Activated B cell treated with CpG ODN at 0.5 μM for 24 hours (primary cell): ENCODE measurements at regions of chr17 and their contacts with region 1.

Region 1: DNA sequence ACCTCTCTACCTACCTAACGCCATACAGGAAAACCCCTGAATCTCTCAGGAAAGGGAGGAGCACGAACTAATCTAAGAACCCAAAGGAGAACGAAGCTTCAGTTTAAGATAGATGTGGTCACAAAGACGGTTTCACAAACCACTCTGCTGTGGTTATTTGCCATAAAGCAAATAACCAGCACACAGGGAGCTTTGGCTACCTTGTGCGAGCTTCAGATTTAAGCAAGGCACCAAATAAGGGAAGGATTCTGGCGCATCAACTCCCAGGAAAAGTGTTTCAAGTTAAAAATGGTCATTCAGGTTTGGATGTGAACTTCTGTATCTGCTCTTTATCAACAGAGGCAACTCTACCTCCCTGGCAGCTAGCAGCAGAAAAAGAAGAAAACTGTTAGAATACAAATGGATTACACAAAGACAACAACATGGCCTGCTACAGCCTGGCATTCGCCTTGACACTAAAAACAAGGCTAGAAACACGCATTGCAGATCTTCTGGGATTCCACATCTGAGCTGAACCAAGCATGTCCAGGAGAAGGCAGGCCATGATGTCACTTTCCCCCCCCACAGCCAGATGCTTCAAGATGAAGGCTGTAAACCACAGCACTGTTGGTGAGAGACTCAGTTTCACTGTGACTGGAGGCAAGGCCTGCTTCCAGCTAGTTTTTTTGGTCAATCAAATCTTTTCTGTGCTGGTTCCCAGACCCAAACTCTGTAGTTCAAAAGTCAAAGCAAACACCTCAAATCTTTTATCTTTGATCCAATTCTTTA is 43.6 kb downstream of the SMG6 start:
- DNase-seq: no peak
- ATAC-seq: peak; percentile 64
- H3K4me3 Mint-ChIP-seq: no peak overlapping the region
- H3K27ac Mint-ChIP-seq: no peak overlapping the region
- H3K4me1 Mint-ChIP-seq: peaks cover 18% of the 10 kb centered on the region
- H3K27me3 Mint-ChIP-seq: no peaks in the 10 kb centered on the region
- CTCF ChIP-seq: no peak

Region 2: DNA sequence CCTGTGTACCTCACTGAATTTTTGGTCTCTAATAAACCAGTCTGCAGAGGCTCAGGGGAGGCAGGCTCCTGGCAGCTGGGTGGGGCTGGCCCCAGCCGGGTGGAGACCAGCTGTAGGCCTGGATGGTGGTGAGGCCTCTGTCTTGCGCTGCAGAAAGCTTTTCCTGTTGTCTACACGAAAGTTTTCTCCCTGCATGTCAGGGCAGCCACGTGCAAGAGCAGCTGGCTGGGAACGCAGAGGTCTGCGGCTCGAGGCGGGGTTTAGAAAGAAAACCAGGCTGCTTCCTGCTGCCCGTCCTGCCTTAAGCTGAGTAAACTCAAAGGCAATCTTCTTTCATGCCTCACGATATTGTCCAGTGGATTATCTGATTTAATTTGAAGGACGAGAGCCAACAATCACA is 495.7 kb before region 1 on chr17:
- CTCF ChIA-PET with region 1: no interaction called
- POLR2A ChIA-PET with region 1: interaction called, 10 read pairs
- intact Hi-C with region 1: no loop called
- DNase-seq: peak; percentile 41
- ATAC-seq: peak; percentile 85
- H3K4me3 Mint-ChIP-seq: peak overlapping the region; percentile 53
- H3K27ac Mint-ChIP-seq: peak overlapping the region; percentile 72
- H3K4me1 Mint-ChIP-seq: peaks cover 46% of the 10 kb centered on the region
- H3K27me3 Mint-ChIP-seq: no peaks in the 10 kb centered on the region
- CTCF ChIP-seq: no peak